H1 (cell line): ENCODE measurements at regions of chr5 and their contacts with region 1.

Region 1: GRCh38 chr5:126354012-126354857 is 69.0 kb upstream of the GRAMD2B start:
- DNase-seq: no peak
- H3K4me3 ChIP-seq: no peak overlapping the region
- H3K27ac ChIP-seq: no peak overlapping the region
- H3K4me1 ChIP-seq: peaks cover 0 to 5% (median 3%) of the 10 kb centered on the region in 4 experiments; a peak in 4 of 7 replicates
- H3K27me3 ChIP-seq: no peaks in the 10 kb centered on the region
- CTCF ChIP-seq: peak in 2 of 3 experiments; percentile 33 to 45; a peak in 2 of 4 replicates
- EP300 ChIP-seq: no peak
- POLR2A ChIP-seq: no peak
- RAD21 ChIP-seq: peak; percentile 77 to 78

Region 2: GRCh38 chr5:126369967-126370731 is 15.9 kb after region 1 on chr5:
- CTCF ChIA-PET with region 1: interaction called, 11 read pairs
- POLR2A ChIA-PET with region 1: interaction called, 3 read pairs
- DNase-seq: no peak
- H3K4me3 ChIP-seq: no peak overlapping the region
- H3K27ac ChIP-seq: no peak overlapping the region
- H3K4me1 ChIP-seq: peaks cover 9 to 25% (median 23%) of the 10 kb centered on the region in 4 experiments; a peak in 6 of 7 replicates
- H3K27me3 ChIP-seq: no peaks in the 10 kb centered on the region
- CTCF ChIP-seq: no peak
- EP300 ChIP-seq: no peak
- POLR2A ChIP-seq: no peak
- RAD21 ChIP-seq: no peak

Region 3: DNA sequence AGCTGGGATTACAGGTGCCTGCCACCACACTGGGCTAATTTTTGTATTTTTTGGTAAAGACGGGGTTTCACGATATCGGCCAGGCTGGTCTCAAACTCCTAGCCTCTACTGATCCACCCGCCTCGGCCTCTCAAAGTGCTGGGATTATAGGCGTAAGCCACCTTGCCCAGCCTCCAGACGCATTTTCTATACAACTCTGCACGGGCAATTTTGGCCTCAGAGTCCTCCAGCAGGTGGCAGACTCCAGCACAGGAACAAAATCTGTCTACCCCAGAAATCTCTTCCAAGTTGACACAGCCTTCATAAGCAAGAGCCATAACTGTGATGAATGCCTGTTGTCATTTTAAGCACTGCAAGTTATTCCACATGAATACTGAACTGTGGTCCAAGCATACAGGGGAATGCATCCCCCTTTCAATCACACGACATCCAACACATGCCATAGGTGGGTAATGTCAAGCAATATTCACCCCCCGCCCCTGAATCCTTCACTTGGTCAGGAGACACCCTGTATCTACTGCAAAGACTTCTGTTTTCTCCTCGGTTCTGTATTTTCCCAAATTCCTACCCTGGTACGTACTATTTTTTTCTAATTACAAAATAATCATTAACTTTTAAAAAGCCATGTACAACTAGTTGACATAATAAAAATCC is 190.0 kb after region 1 on chr5:
- CTCF ChIA-PET with region 1: interaction called, 125 read pairs
- POLR2A ChIA-PET with region 1: interaction called, 7 read pairs
- DNase-seq: peak in 1 of 2 experiments; percentile 52
- H3K4me3 ChIP-seq: no peak overlapping the region
- H3K27ac ChIP-seq: no peak overlapping the region
- H3K4me1 ChIP-seq: no peaks in the 10 kb centered on the region
- H3K27me3 ChIP-seq: no peaks in the 10 kb centered on the region
- CTCF ChIP-seq: peak; percentile 45 to 64 (median 57)
- EP300 ChIP-seq: no peak
- POLR2A ChIP-seq: no peak
- RAD21 ChIP-seq: peak; percentile 45 to 52